H1 (cell line): ENCODE measurements at regions of chr18 and their contacts with region 1.

Region 1: DNA sequence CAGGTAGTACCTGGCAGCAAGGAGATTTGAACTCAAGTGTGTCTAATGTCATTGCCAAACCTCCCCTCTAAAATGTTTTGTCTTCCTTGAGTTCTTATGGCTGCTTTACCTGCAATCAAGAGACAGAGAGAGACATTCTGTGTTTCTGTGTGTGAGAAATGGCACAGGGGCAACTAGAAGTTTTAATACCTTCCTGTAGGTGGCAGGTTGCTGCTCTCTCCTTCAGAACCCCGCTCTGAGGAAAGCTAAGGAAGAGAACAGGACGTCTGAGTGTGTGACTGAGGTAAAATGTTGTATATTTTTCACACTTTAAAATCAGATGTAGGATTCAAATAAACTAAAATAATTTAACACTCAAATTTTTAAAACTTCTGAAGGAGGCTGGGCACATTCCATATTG is 19.2 kb downstream of the DTNA start:
- DNase-seq: peak in 1 of 2 experiments; percentile 27
- H3K4me3 ChIP-seq: no peak overlapping the region
- H3K27ac ChIP-seq: no peak overlapping the region
- H3K4me1 ChIP-seq: peaks cover 0 to 5% (median 1%) of the 10 kb centered on the region in 4 experiments; a peak in 3 of 7 replicates
- H3K27me3 ChIP-seq: no peaks in the 10 kb centered on the region
- CTCF ChIP-seq: peak; percentile 13 to 80 (median 54)
- EP300 ChIP-seq: no peak
- POLR2A ChIP-seq: no peak
- RAD21 ChIP-seq: peak; percentile 43 to 51; a peak in 3 of 4 replicates

Region 2: DNA sequence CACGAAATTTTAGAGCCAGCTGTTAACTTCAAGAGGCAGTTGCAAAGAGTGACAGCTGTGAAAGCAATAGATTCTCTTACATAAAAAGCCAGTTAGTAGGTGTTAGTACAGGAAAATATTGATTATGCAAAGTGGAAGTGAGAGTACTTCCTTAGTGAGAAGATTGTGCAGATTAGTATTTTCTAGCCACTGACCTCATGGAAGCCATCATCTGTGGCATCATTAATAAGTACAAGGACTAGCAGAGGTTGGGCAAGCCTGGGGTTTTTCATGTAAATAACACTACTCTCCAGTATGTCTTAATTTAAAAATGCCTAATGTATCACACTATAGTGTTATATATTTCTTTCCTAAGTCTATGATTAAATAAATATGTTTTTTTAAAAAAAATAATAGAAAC is 185.3 kb before region 1 on chr18:
- CTCF ChIA-PET with region 1: no interaction called
- POLR2A ChIA-PET with region 1: no interaction called
- DNase-seq: no peak
- H3K4me3 ChIP-seq: no peak overlapping the region
- H3K27ac ChIP-seq: no peak overlapping the region
- H3K4me1 ChIP-seq: peaks cover 2 to 16% (median 11%) of the 10 kb centered on the region in 4 experiments; a peak in 4 of 7 replicates
- H3K27me3 ChIP-seq: no peaks in the 10 kb centered on the region
- CTCF ChIP-seq: no peak
- EP300 ChIP-seq: no peak
- POLR2A ChIP-seq: no peak
- RAD21 ChIP-seq: no peak

Region 3: GRCh38 chr18:34701911-34702310 is 27.4 kb before region 1 on chr18:
- CTCF ChIA-PET with region 1: interaction called, 11 read pairs
- POLR2A ChIA-PET with region 1: interaction called, 4 read pairs
- DNase-seq: no peak
- H3K4me3 ChIP-seq: no peak overlapping the region
- H3K27ac ChIP-seq: no peak overlapping the region
- H3K4me1 ChIP-seq: peaks cover 0 to 6% (median 1%) of the 10 kb centered on the region in 4 experiments; a peak in 3 of 7 replicates
- H3K27me3 ChIP-seq: no peaks in the 10 kb centered on the region
- CTCF ChIP-seq: no peak
- EP300 ChIP-seq: no peak
- POLR2A ChIP-seq: no peak
- RAD21 ChIP-seq: no peak

Region 4: DNA sequence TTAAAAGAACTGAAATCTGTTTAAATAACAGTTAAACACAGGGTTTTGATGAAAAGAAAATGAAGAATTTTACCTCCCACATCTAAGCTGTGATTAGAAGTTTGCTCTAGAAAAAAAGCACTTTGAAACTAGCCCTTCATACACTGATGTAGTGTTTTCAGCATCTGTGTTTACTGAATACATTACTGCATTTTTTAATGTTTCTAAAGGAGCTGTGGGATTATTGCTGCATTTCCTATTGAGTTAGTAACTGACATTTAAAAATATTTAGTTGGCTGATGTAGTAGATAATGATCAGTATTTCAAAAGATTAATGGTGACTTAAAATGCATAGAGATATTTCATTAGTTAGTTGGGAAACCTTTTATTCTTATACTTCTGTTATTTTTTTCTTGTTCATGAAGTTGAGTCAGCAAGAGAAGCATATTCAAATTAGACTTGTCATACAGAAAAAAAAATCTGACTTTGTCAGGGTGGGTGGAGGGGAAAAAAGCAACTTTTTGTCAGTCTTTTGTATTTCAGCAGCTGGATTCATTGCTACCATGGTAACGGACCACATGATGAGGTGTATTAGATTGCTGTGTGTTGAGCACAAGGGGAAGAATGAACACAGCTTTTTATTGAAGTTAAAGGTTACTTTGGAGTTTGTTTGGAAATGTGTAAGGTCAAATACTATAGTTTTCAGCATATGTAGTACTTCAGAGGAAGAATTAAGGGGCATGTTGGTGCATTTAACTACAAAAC is 19.4 kb before region 1 on chr18 and contains the start of gene DTNA:
- CTCF ChIA-PET with region 1: interaction called, 17 read pairs
- POLR2A ChIA-PET with region 1: no interaction called
- DNase-seq: no peak
- H3K4me3 ChIP-seq: no peak within 1 kb of the TSS
- H3K27ac ChIP-seq: no peak within 1 kb of the TSS
- H3K4me1 ChIP-seq: peaks cover 0 to 14% (median 2%) of the 10 kb centered on the region in 4 experiments; a peak in 3 of 7 replicates
- H3K27me3 ChIP-seq: no peaks in the 10 kb centered on the region
- CTCF ChIP-seq: no peak
- EP300 ChIP-seq: no peak
- POLR2A ChIP-seq: no peak
- RAD21 ChIP-seq: no peak
- total RNA-seq, gene DTNA: 29.0 and 32.7 TPM in 2 replicates

Region 5: DNA sequence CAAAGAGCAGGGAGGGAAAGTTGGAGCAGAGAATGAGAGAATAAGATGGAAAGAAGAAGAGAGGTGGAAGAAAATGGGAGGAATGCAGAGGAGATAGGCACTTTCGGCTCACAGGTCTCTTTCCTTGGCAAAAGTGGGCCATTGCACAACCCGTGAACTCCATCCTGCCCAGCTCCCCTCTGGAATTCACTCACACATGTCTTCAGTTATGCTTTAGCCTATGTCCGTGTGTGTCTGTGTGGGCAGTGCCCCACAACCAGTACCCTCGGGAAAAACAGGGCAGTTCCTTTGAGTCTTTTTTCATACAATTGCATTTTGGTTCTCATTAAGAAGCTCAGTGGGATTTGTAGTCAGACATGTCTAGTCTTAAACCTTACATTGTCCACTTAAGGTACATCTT is 15.3 kb after region 1 on chr18:
- CTCF ChIA-PET with region 1: interaction called, 14 read pairs
- POLR2A ChIA-PET with region 1: no interaction called
- DNase-seq: no peak
- H3K4me3 ChIP-seq: no peak overlapping the region
- H3K27ac ChIP-seq: no peak overlapping the region
- H3K4me1 ChIP-seq: no peaks in the 10 kb centered on the region
- H3K27me3 ChIP-seq: no peaks in the 10 kb centered on the region
- CTCF ChIP-seq: no peak
- EP300 ChIP-seq: no peak
- POLR2A ChIP-seq: no peak
- RAD21 ChIP-seq: no peak

Region 6: GRCh38 chr18:34752056-34752455 is 22.8 kb after region 1 on chr18:
- CTCF ChIA-PET with region 1: interaction called, 14 read pairs
- POLR2A ChIA-PET with region 1: no interaction called
- DNase-seq: no peak
- H3K4me3 ChIP-seq: no peak overlapping the region
- H3K27ac ChIP-seq: no peak overlapping the region
- H3K4me1 ChIP-seq: no peaks in the 10 kb centered on the region
- H3K27me3 ChIP-seq: no peaks in the 10 kb centered on the region
- CTCF ChIP-seq: no peak
- EP300 ChIP-seq: no peak
- POLR2A ChIP-seq: no peak
- RAD21 ChIP-seq: no peak

Region 7: GRCh38 chr18:34828104-34828503 is 98.8 kb after region 1 on chr18:
- CTCF ChIA-PET with region 1: no interaction called
- POLR2A ChIA-PET with region 1: no interaction called
- DNase-seq: no peak
- H3K4me3 ChIP-seq: no peak overlapping the region
- H3K27ac ChIP-seq: no peak overlapping the region
- H3K4me1 ChIP-seq: no peaks in the 10 kb centered on the region
- H3K27me3 ChIP-seq: no peaks in the 10 kb centered on the region
- CTCF ChIP-seq: no peak
- EP300 ChIP-seq: no peak
- POLR2A ChIP-seq: no peak
- RAD21 ChIP-seq: no peak

Region 8: GRCh38 chr18:34933880-34934708 is 204.8 kb after region 1 on chr18:
- CTCF ChIA-PET with region 1: no interaction called
- POLR2A ChIA-PET with region 1: no interaction called
- DNase-seq: no peak
- H3K4me3 ChIP-seq: no peak overlapping the region
- H3K27ac ChIP-seq: no peak overlapping the region
- H3K4me1 ChIP-seq: no peaks in the 10 kb centered on the region
- H3K27me3 ChIP-seq: no peaks in the 10 kb centered on the region
- CTCF ChIP-seq: no peak
- EP300 ChIP-seq: no peak
- POLR2A ChIP-seq: no peak
- RAD21 ChIP-seq: no peak